ENCODE measurements at regions of chr2 and their contacts with region 1.

Region 1: DNA sequence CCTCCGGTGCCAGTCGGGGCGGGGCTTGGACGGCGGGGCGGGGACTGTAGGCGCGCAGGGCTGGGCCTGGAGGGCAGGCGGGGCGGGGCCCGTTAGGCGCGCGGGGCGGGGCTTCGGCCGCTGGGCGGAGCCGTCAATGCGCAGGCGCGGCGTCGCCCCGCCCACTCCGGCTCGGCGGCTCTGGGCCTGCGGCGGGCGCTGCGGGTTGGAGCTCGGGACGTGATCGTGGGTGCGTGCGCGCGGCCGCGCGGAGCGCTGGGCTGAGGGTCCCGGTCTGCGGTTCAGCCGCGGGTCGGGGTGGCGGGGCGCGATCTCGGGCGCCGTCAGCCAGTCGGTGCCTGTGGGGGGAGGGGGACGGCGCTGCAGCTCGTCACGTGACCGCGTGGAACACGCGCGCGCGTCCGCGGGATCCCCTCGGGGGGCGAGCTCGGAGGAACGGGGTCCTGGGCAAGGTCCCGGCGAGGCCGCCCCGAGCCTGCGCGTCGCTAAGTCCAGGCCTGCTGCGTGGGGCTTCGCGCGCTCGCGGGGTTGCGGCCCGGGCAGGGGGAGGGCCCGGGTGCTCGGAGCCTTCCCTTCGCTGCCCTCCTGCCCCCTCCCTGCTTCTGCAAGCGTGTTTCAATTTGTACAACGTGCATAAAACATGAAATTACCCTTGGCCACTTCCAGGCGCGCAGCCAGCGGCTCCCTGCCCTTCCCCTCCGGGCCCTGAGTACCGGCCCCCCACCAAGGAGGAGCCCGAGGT is at the start of gene D2HGDH:
- DNase-seq: peak; percentile 96
- H3K4me3 Mint-ChIP-seq: peak within 1 kb of the TSS; percentile 80
- H3K27ac Mint-ChIP-seq: peak within 1 kb of the TSS; percentile 81
- H3K4me1 Mint-ChIP-seq: peaks cover 56% of the 10 kb centered on the region
- H3K27me3 Mint-ChIP-seq: no peaks in the 10 kb centered on the region

Region 2: GRCh38 chr2:241064008-241064801 is 670.4 kb before region 1 on chr2:
- CTCF ChIA-PET with region 1: no interaction called
- DNase-seq: peak; percentile 56
- H3K4me3 Mint-ChIP-seq: no peak overlapping the region
- H3K27ac Mint-ChIP-seq: no peak overlapping the region
- H3K4me1 Mint-ChIP-seq: peaks cover 2% of the 10 kb centered on the region
- H3K27me3 Mint-ChIP-seq: peaks cover 10% of the 10 kb centered on the region

Region 3: GRCh38 chr2:241702132-241703031 is 32.3 kb before region 1 on chr2:
- CTCF ChIA-PET with region 1: interaction called, 22 read pairs
- DNase-seq: peak; percentile 91
- H3K4me3 Mint-ChIP-seq: peak overlapping the region; percentile 81
- H3K27ac Mint-ChIP-seq: peak overlapping the region; percentile 85
- H3K4me1 Mint-ChIP-seq: peaks cover 31% of the 10 kb centered on the region
- H3K27me3 Mint-ChIP-seq: no peaks in the 10 kb centered on the region